ENCODE measurements at regions of chr2 and their contacts with region 1.

Region 1: GRCh38 chr2:99356853-99357252 is 19.7 kb downstream of the EIF5B start:
- DNase-seq: no peak
- ATAC-seq: peak; percentile 79
- H3K4me3 ChIP-seq: no peak overlapping the region
- H3K27ac ChIP-seq: no peak overlapping the region
- H3K4me1 ChIP-seq: no peaks in the 10 kb centered on the region
- H3K27me3 ChIP-seq: no peaks in the 10 kb centered on the region
- CTCF ChIP-seq: no peak
- EP300 ChIP-seq: no peak
- POLR2A ChIP-seq: no peak
- RAD21 ChIP-seq: no peak

Region 2: GRCh38 chr2:99471654-99472599 is 115.1 kb after region 1 on chr2:
- CTCF ChIA-PET with region 1: no interaction called
- POLR2A ChIA-PET with region 1: interaction called, 10 read pairs
- RAD21 ChIA-PET with region 1: no interaction called
- SMC1A ChIA-PET with region 1: no interaction called
- in situ Hi-C with region 1: no loop called
- intact Hi-C with region 1: no loop called
- DNase-seq: no peak
- ATAC-seq: no peak
- H3K4me3 ChIP-seq: no peak overlapping the region
- H3K27ac ChIP-seq: no peak overlapping the region
- H3K4me1 ChIP-seq: no peaks in the 10 kb centered on the region
- H3K27me3 ChIP-seq: no peaks in the 10 kb centered on the region
- CTCF ChIP-seq: no peak
- EP300 ChIP-seq: no peak
- POLR2A ChIP-seq: no peak
- RAD21 ChIP-seq: no peak

Measured in GM12878 (cell line).